Mammary epithelial cell (primary cell): ENCODE measurements at regions of chr1 and their contacts with region 1.

Region 1: DNA sequence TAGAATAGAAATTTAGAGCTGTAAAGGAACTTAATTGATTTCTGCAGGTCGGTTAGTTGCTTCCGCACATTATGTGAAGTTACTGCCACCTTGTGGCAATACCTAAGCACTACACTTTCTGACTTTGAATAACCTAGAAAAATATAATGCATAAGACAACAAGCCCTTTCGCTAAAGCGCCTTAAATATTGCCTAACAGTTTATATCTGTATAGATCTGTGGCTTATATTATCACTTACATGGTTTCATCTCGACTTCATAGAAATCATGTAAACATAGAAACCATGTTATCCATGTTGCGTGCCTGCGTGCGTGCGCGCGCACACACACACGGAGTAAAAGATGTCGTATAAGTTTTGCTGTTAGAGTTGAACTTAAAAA is 10.9 kb upstream of the IFI16 start:
- DNase-seq: peak; percentile 50
- H3K4me3 ChIP-seq: peak overlapping the region; percentile 43 to 52 (median 48)
- H3K27ac ChIP-seq: peak overlapping the region; percentile 56
- H3K4me1 ChIP-seq: peaks cover 27% of the 10 kb centered on the region
- H3K27me3 ChIP-seq: no peaks in the 10 kb centered on the region
- CTCF ChIP-seq: peak; percentile 78 to 83

Region 2: DNA sequence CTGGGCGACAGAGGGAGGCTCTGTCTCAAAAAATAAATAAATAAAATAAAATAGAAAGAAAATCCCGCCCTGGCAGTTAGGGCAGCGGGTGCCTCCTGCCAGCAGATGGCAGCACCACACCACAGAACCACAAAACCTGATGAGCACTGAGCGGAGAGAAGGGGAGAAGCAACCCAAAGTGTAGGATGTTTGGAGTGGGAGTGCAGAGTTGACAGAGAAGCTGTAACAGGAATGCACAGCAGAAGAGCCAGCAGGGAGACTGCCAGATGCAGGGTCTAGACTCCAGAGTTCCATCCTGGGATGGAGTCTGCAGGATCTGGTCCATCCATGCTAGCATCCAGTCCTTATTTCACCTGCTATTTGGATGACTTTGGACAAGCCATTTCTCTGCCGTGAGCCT is 1035.1 kb before region 1 on chr1:
- CTCF ChIA-PET with region 1: no interaction called
- dilution Hi-C with region 1: no loop called
- in situ Hi-C with region 1: no loop called
- intact Hi-C with region 1: loop called (anchors 2 kb)
- DNase-seq: peak; percentile 60
- H3K4me3 ChIP-seq: no peak overlapping the region
- H3K27ac ChIP-seq: no peak overlapping the region
- H3K4me1 ChIP-seq: peaks cover 31% of the 10 kb centered on the region
- H3K27me3 ChIP-seq: no peaks in the 10 kb centered on the region
- CTCF ChIP-seq: peak; percentile 87 to 89

Region 3: DNA sequence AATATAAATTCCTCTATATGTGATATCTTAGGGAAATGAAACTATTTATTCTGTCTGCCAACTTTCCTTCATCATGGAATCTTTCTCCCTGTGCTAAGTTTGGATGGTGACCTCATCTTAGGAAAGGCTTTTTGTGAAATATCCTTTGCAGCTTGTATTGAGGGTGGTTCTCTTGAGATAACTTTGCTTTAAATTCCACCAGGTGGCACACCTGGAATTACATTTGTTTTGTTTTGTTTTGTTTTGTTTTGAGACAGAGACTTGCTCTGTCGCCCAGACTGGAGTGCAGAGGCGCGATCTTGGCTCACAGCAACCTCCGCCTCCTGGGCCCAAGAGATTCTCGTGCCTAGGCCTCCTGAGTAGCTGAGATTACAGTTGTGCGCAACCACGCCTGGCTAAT is 752.1 kb before region 1 on chr1:
- CTCF ChIA-PET with region 1: no interaction called
- dilution Hi-C with region 1: no loop called
- in situ Hi-C with region 1: no loop called
- intact Hi-C with region 1: loop called (anchors 1 kb)
- DNase-seq: no peak
- H3K4me3 ChIP-seq: no peak overlapping the region
- H3K27ac ChIP-seq: no peak overlapping the region
- H3K4me1 ChIP-seq: no peaks in the 10 kb centered on the region
- H3K27me3 ChIP-seq: no peaks in the 10 kb centered on the region
- CTCF ChIP-seq: peak in 1 of 2 donors; percentile 20

Region 4: GRCh38 chr1:158793604-158794003 is 205.2 kb before region 1 on chr1:
- CTCF ChIA-PET with region 1: no interaction called
- dilution Hi-C with region 1: no loop called
- in situ Hi-C with region 1: loop called in 1 of 2 experiments (anchors 10 kb)
- intact Hi-C with region 1: loop called (anchors 2 kb)
- DNase-seq: no peak
- H3K4me3 ChIP-seq: no peak overlapping the region
- H3K27ac ChIP-seq: no peak overlapping the region
- H3K4me1 ChIP-seq: no peaks in the 10 kb centered on the region
- H3K27me3 ChIP-seq: peaks cover 4% of the 10 kb centered on the region
- CTCF ChIP-seq: peak; percentile 27 to 40

Region 5: GRCh38 chr1:158978730-158979129 is 20.0 kb before region 1 on chr1:
- CTCF ChIA-PET with region 1: no interaction called
- dilution Hi-C with region 1: no loop called
- in situ Hi-C with region 1: no loop called
- intact Hi-C with region 1: no loop called
- DNase-seq: no peak
- H3K4me3 ChIP-seq: no peak overlapping the region
- H3K27ac ChIP-seq: no peak overlapping the region
- H3K4me1 ChIP-seq: no peaks in the 10 kb centered on the region
- H3K27me3 ChIP-seq: no peaks in the 10 kb centered on the region
- CTCF ChIP-seq: no peak

Region 6: DNA sequence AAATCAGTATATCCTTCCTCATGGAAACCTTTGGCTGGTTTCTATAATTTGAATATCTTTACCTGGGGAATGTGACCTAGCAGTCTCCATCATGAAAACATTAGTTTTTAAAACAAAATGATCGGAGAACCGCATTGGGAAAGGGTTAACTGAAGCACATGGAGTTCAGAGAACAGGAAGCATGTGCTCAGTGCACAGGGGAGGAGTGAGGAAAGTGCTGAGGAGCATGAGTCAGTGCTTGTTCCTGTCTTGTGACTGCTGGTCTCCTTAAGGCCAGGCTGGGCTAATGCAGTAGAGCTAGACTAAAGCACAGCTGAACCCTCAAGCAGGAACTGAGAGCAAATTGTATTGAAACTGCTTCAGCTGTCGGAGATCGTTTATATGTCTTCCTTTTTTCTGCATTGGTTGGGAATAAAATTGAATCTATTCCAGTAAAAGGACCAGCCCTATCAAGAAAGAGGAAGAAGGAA is 16.7 kb after region 1 on chr1:
- CTCF ChIA-PET with region 1: no interaction called
- dilution Hi-C with region 1: no loop called
- in situ Hi-C with region 1: no loop called
- intact Hi-C with region 1: no loop called
- DNase-seq: peak; percentile 82
- H3K4me3 ChIP-seq: no peak overlapping the region
- H3K27ac ChIP-seq: peak overlapping the region; percentile 19
- H3K4me1 ChIP-seq: peaks cover 13% of the 10 kb centered on the region
- H3K27me3 ChIP-seq: no peaks in the 10 kb centered on the region
- CTCF ChIP-seq: no peak

Region 7: DNA sequence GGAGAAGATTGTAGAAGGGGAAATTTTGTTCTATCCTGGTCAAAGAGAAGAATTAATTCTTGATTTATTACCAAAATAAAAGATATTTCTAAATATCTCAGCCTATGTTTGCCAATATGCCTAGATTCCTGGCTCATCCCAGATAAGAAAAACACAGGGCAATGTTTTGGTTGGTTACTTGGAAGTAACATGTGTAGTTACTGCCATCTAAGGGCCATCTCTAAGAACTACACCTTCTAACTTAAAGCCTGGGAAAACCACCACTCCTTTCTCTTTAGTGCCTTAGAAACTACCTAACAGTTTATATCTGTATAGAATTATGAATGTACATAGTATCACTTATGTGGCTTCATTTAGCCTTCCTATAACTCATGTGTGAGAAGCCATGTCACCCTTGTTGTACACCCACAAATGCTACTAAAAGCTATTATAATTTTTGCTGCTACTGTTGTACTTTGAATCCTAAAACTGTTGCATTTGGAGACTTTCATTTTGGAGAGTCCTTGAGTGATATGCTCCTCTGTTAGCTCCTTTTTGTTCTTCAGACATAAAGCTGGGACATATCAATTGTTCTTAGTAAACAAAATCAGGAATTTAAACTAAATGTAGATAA is 73.3 kb after region 1 on chr1:
- CTCF ChIA-PET with region 1: no interaction called
- dilution Hi-C with region 1: no loop called
- in situ Hi-C with region 1: no loop called
- intact Hi-C with region 1: loop called (anchors 1 kb)
- DNase-seq: peak; percentile 46
- H3K4me3 ChIP-seq: no peak overlapping the region
- H3K27ac ChIP-seq: no peak overlapping the region
- H3K4me1 ChIP-seq: no peaks in the 10 kb centered on the region
- H3K27me3 ChIP-seq: no peaks in the 10 kb centered on the region
- CTCF ChIP-seq: peak; percentile 67